Naive thymus-derived CD8-positive, alpha-beta T cell (primary cell): ENCODE measurements at regions of chr3 and their contacts with region 1.

Region 1: DNA sequence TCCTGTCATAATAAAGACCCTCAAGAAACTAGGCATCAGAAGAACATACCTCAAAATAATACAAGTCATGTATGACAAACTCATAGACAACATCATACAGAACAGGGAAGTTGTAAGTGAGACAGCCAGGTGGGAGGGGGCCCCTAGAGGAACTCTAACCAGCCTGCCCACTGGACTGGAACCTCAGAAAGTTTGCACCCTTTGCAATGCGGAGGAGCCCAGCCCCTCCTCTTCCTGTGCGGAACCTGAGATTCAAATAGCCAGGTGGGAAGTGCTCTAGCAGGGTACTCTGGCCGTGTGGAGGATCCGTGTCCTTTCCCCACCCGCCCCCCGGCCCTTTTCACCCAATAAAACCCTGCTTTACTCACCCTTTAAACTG is 387.0 kb upstream of the CBLB start:
- DNase-seq: peak in 1 of 10 donors; percentile 10
- ATAC-seq: peak in 1 of 2 donors; percentile 37
- H3K4me3 Mint-ChIP-seq: peak overlapping the region in 1 of 10 donors; percentile 24
- H3K27ac Mint-ChIP-seq: no peak overlapping the region
- H3K4me1 Mint-ChIP-seq: peaks cover 0 to 13% (median 0%) of the 10 kb centered on the region in 4 donors
- H3K27me3 Mint-ChIP-seq: no peaks in the 10 kb centered on the region

Region 2: GRCh38 chr3:107795514-107796094 is 1539.7 kb after region 1 on chr3:
- POLR2A ChIA-PET with region 1: interaction called, 11 read pairs
- DNase-seq: no peak
- ATAC-seq: no peak
- H3K4me3 Mint-ChIP-seq: no peak overlapping the region
- H3K27ac Mint-ChIP-seq: peak overlapping the region in 5 of 10 donors; percentile 28 to 85 (median 70)
- H3K4me1 Mint-ChIP-seq: peaks cover 9 to 27% (median 20%) of the 10 kb centered on the region in 4 donors
- H3K27me3 Mint-ChIP-seq: no peaks in the 10 kb centered on the region